ENCODE measurements at regions of chr2 and their contacts with region 1.

Region 1: GRCh38 chr2:172704072-172704936 is 31.3 kb upstream of the RAPGEF4 start:
- DNase-seq: peak in 1 of 2 experiments; percentile 30
- H3K4me3 ChIP-seq: no peak overlapping the region
- H3K27ac ChIP-seq: no peak overlapping the region
- H3K4me1 ChIP-seq: peaks cover 10% of the 10 kb centered on the region
- H3K27me3 ChIP-seq: no peaks in the 10 kb centered on the region
- CTCF ChIP-seq: peak; percentile 93

Region 2: GRCh38 chr2:171574149-171574795 is 1130.0 kb before region 1 on chr2:
- CTCF ChIA-PET with region 1: no interaction called
- POLR2A ChIA-PET with region 1: no interaction called
- intact Hi-C with region 1: loop called (anchors 5 kb)
- DNase-seq: peak; percentile 55 to 86
- H3K4me3 ChIP-seq: no peak overlapping the region
- H3K27ac ChIP-seq: no peak overlapping the region
- H3K4me1 ChIP-seq: no peaks in the 10 kb centered on the region
- H3K27me3 ChIP-seq: no peaks in the 10 kb centered on the region
- CTCF ChIP-seq: peak; percentile 98

Region 3: DNA sequence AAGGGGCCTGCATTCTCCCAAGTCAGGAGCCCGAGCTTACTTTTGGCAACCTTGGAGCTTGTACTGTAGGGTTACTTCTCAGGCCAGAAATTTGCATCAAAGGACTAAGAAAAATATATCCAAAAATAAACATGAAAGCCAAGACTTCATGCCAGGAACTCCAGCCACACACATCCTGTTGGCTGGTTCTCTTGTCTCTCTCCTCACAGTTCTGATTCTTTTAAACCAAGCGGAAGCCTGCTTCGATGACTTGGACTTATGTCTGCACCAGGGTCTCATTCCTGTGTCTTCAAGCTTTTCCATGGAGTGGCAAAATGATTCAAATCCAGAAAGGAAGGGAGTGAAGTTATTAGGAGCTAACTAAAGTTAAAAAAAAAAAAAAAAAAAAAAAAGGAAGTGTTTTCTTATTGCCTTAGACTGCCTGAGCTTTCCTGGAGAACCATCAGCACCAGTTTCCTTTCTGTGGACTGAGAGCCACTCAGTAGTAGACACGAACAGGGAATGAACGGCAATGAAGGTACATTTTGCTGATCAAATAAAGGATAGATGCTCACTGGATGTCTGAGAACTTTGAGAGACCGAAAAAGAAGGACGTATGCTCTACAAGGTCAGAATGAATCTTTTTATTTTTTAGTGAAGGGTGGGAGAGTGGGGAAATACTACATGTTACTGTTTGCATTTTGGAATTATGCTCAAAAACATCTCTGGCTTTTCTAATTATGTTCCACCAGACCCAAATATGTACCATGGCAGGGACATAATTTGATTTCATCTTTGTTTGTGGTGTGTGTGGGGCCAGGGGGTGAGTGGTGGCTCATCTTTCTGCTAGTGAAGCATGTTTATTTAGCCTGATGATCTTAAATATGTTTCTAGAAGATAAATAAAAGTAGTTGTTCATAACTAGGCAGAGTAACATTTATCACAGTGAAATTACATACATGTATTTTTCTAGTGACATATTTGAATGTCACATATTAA is 117.4 kb after region 1 on chr2:
- CTCF ChIA-PET with region 1: no interaction called
- POLR2A ChIA-PET with region 1: interaction called, 11 read pairs
- intact Hi-C with region 1: no loop called
- DNase-seq: no peak
- H3K4me3 ChIP-seq: no peak overlapping the region
- H3K27ac ChIP-seq: no peak overlapping the region
- H3K4me1 ChIP-seq: no peaks in the 10 kb centered on the region
- H3K27me3 ChIP-seq: no peaks in the 10 kb centered on the region
- CTCF ChIP-seq: no peak